Posterior cingulate gyrus (tissue), 11 donors: ENCODE measurements at regions of chr7 and their contacts with region 1.

Region 1: GRCh38 chr7:73718905-73719805 is at the start of gene STX1A:
- DNase-seq: peak in 7 of 10 donors; percentile 54 to 97 (median 71)

Region 2: DNA sequence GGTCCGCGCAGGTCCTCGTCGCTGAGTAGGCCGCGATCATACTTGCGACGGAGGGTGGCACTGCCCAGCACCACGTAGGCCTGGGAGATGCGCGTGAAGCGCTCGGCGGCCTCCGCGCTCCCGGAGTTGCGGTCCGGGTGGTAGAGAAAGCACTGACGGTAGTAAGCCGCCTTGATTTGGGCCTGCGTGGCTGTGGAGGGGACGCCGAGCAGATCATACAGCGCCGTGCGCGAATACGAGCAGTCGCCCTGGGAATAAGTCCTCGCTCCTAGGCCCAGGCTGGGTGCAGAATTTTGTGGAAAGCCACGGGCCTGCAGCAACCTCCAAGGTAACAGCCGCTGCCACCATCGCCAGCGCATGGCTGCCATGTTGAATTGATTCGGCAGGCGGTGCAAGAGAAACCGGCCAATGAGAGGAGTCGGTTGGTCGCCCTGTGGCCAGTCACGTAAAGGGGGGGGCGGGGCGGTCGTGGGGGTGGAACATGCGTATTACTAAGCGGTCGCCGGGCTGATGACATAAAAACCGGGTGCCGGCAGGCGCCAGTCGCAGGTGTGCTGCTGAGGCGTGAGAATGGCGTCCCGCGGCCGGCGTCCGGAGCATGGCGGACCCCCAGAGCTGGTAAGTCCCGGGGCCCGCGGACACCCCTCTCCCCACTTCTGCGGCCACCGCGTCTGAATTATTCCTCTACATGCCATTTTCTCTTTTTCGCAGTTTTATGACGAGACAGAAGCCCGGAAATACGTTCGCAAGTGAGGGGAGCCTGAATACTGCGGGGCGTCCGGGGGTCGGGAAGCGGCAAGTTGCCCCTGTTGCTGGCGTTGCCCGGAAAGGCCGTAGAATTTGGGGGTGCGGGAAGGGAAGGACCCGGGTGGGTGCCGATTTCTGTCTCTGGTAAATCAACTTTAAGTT is 35.8 kb before region 1 on chr7 and contains the starts of genes BUD23 and DNAJC30:
- intact Hi-C with region 1: loop called (anchors 5 kb)
- DNase-seq: peak; percentile 90 to 99 (median 93)